ENCODE measurements at regions of chr17 and their contacts with region 1.

Region 1: DNA sequence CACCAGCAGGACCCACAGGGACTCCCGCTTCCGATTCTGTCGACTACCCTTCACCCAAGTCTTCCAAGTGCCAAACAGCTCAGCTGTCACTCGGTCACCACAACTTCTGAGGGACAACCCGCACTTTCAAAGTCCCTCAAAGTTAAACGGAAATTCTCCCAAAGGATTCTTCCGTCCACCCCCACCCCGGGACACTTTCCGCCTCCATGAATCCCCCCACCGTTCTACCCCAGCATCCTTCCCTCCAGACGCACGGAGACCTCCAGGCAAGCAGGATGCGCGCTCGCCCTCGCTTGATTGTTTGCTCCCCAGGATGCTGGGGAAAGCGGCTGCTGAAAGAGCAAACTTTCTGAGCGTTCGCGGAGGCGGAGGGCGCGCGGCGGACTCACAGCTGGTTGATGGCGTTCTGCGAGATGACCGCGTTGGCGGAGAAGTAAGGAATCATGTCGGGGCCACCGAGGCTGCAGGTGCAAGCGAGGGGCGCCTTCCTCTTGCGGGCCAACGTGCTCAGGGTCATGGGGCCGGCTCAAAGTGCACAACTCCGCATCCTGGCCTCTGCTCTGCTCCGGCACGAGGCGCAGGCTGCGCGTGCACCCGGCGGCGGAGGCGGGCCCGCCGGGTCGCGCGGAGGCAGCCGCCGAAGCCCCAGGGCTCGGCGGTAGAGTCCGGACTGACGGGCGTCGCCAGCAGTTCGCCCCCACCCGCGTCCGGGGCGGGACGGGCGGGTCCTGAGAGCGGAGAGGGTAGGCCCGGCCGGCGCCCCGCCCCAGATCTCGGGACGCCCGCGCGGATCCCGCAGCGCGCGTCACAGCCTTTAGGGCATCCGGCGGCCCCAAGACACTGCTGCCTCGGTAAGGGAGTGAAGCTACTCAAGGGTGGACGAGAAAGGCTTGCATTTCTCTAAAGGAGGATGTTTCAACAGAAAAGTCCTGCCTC is 138.3 kb upstream of the CORO6 start:
- DNase-seq: peak; percentile 95
- H3K4me3 Mint-ChIP-seq: peak overlapping the region; percentile 91
- H3K27ac Mint-ChIP-seq: peak overlapping the region; percentile 95
- H3K4me1 Mint-ChIP-seq: peaks cover 42% of the 10 kb centered on the region
- H3K27me3 Mint-ChIP-seq: no peaks in the 10 kb centered on the region

Region 2: GRCh38 chr17:28916302-28916934 is 844.6 kb before region 1 on chr17:
- CTCF ChIA-PET with region 1: no interaction called
- POLR2A ChIA-PET with region 1: no interaction called
- DNase-seq: peak; percentile 46
- H3K4me3 Mint-ChIP-seq: no peak overlapping the region
- H3K27ac Mint-ChIP-seq: no peak overlapping the region
- H3K4me1 Mint-ChIP-seq: peaks cover 8% of the 10 kb centered on the region
- H3K27me3 Mint-ChIP-seq: no peaks in the 10 kb centered on the region

Region 3: DNA sequence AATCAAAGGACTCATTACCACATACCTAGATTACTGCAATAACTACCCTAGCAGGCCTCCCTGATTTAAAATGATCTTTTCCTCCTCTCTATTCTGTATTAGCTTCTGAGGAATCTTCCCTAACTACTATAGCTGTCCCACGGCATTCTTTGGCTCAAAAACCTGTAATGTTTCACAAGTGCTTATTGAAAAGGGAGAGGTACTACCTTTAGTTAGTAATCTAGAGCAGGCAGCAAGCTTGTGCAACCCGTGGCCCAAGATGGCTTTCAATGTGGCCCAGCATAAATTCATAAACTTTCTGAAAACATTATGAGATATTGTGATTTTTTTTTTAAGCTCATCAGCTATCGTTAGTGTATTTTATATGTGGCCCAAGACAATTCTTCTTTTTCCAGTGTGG is 67.3 kb before region 1 on chr17:
- CTCF ChIA-PET with region 1: interaction called, 3 read pairs
- POLR2A ChIA-PET with region 1: interaction called, 16 read pairs
- DNase-seq: no peak
- H3K4me3 Mint-ChIP-seq: no peak overlapping the region
- H3K27ac Mint-ChIP-seq: peak overlapping the region; percentile 0
- H3K4me1 Mint-ChIP-seq: peaks cover 23% of the 10 kb centered on the region
- H3K27me3 Mint-ChIP-seq: no peaks in the 10 kb centered on the region

Region 4: GRCh38 chr17:29722411-29723198 is 38.4 kb before region 1 on chr17:
- CTCF ChIA-PET with region 1: interaction called, 4 read pairs
- POLR2A ChIA-PET with region 1: interaction called, 30 read pairs
- DNase-seq: peak; percentile 26
- H3K4me3 Mint-ChIP-seq: no peak overlapping the region
- H3K27ac Mint-ChIP-seq: peak overlapping the region; percentile 4
- H3K4me1 Mint-ChIP-seq: peaks cover 50% of the 10 kb centered on the region
- H3K27me3 Mint-ChIP-seq: no peaks in the 10 kb centered on the region

Region 5: GRCh38 chr17:29747660-29748059 is 13.4 kb before region 1 on chr17:
- CTCF ChIA-PET with region 1: no interaction called
- POLR2A ChIA-PET with region 1: interaction called, 11 read pairs
- DNase-seq: no peak
- H3K4me3 Mint-ChIP-seq: no peak overlapping the region
- H3K27ac Mint-ChIP-seq: no peak overlapping the region
- H3K4me1 Mint-ChIP-seq: peaks cover 19% of the 10 kb centered on the region
- H3K27me3 Mint-ChIP-seq: no peaks in the 10 kb centered on the region

Region 6: DNA sequence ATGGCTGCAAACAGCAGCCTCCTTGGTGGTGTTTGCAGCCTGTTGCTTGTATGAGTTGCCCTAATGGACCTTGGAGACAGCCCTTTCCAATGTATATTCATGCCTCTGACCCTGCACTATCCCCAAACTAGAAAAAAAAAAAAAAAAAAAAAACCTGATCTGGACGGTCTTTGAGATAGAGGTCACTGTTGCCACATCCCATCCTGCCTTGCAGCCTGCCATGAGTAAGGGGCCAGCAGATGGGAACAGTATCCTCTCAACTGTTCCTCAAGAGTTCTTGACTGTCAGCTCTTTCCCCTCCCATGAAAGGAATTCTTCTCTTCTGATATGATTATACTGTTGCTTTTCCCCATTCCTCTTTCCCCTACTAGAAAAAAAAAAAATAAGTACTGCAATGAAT is 16.6 kb after region 1 on chr17:
- CTCF ChIA-PET with region 1: interaction called, 8 read pairs
- POLR2A ChIA-PET with region 1: interaction called, 14 read pairs
- DNase-seq: no peak
- H3K4me3 Mint-ChIP-seq: no peak overlapping the region
- H3K27ac Mint-ChIP-seq: no peak overlapping the region
- H3K4me1 Mint-ChIP-seq: peaks cover 9% of the 10 kb centered on the region
- H3K27me3 Mint-ChIP-seq: no peaks in the 10 kb centered on the region